A549 (cell line): ENCODE measurements at regions of chr12 and their contacts with region 1.

Region 1: DNA sequence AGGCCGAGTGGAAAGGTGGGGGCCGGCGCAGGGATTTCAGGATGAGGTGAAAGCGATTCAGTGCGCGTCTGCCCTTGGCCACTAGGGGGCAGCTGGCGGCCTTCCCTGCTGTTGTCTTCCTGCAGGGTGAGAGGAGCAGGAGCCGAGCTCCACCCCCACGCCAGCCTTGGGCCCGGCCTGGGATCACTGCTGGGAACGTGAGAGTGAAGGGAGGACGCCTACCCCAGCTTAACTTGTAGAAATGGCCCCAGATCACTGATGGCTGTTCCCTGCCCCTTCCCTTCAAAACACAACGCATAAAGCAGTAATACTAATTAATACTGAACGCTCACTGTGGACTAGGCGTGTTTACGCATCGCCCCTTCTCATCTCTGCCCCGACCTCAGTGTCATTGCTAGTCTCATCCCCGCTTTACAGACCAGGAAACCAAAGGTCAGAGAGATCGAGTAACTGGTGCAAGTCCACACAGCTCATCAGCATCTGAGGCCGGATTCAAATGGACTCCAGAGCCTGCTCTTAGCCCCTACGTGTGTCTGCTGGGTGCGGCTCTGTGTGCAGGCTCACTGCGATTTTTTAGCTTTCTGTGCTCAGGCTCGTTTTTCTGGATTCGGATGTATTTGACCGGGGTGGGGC is 24.3 kb downstream of the MVK start:
- DNase-seq: peak; percentile 83 to 95
- ATAC-seq: peak; percentile 92 to 97
- H3K4me3 ChIP-seq: no peak overlapping the region
- H3K27ac ChIP-seq: peak overlapping the region in 1 of 2 experiments; percentile 62; a peak in 2 of 6 replicates
- H3K4me1 ChIP-seq: peaks cover 4% of the 10 kb centered on the region
- CTCF ChIP-seq: peak; percentile 88
- EP300 ChIP-seq: no peak
- POLR2A ChIP-seq: no peak
- RAD21 ChIP-seq: peak; percentile 88 to 89

Region 2: GRCh38 chr12:109377139-109377685 is 220.7 kb before region 1 on chr12:
- CTCF ChIA-PET with region 1: no interaction called
- POLR2A ChIA-PET with region 1: no interaction called
- DNase-seq: no peak
- ATAC-seq: no peak
- H3K4me3 ChIP-seq: no peak overlapping the region
- H3K27ac ChIP-seq: no peak overlapping the region
- H3K4me1 ChIP-seq: no peaks in the 10 kb centered on the region
- CTCF ChIP-seq: no peak
- EP300 ChIP-seq: no peak
- POLR2A ChIP-seq: no peak
- RAD21 ChIP-seq: no peak

Region 3: GRCh38 chr12:109418848-109419480 is 178.9 kb before region 1 on chr12:
- CTCF ChIA-PET with region 1: no interaction called
- POLR2A ChIA-PET with region 1: no interaction called
- DNase-seq: no peak
- ATAC-seq: no peak
- H3K4me3 ChIP-seq: no peak overlapping the region
- H3K27ac ChIP-seq: no peak overlapping the region
- H3K4me1 ChIP-seq: no peaks in the 10 kb centered on the region
- CTCF ChIP-seq: no peak
- EP300 ChIP-seq: no peak
- POLR2A ChIP-seq: no peak
- RAD21 ChIP-seq: no peak

Region 4: DNA sequence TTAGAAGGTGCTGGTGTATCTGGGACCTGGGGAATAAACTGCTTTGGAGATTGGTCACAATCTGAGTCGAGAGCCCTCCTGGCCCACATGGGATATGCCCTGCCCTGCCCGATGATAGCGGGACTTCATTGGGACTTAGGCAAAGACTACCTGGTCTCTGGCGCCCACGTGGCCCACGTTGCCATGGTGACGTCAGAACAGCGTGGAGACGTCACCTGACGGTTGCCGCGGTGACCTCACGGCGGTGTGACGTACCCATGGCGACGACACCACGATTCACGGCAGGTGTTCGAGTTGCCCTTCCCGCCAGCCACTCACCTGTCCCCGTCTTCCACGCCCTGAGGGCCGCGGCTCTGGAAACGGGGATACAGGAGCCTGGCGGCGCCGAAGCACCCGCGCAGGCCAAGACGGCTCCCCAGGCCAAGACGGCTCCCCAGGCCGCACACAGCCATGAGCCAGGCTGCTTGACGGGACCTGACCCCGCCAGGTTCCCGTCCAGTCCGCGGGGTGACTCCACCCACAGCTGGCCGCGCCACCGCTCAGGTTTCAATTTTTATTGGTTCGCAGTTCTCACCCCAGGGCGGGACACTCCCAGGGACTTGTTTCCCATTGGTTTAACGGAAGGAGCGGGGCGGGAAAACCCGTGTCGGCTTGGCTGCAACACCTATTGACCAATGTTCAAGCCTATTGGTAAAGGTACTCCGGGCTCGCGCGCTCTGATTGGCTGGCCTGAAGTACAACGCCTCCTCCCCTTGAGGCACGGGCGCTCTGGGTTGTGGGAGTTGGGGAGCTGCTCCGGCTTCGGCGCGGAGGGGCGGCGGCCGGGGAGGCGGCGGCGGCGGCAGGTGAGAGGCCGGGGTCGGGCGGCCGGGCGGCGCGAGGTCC is 24.6 kb before region 1 on chr12 and contains the starts of genes MMAB and MVK:
- CTCF ChIA-PET with region 1: interaction called, 23 read pairs
- POLR2A ChIA-PET with region 1: no interaction called
- DNase-seq: peak; percentile 99 to 100
- ATAC-seq: peak; percentile 97 to 99
- H3K4me3 ChIP-seq: peak within 1 kb of the TSS; percentile 77
- H3K27ac ChIP-seq: peak within 1 kb of the TSS; percentile 83 to 87
- H3K4me1 ChIP-seq: peaks cover 11% of the 10 kb centered on the region; the same call in 1 of the 3 replicates
- CTCF ChIP-seq: no peak
- EP300 ChIP-seq: no peak
- POLR2A ChIP-seq: peak; percentile 70
- RAD21 ChIP-seq: no peak
- polyA plus RNA-seq, gene MMAB: 23.0 and 26.1 TPM in 2 replicates
- polyA plus RNA-seq, gene MVK: 5.9 and 7.0 TPM in 2 replicates

Region 5: GRCh38 chr12:109621211-109621694 is 23.3 kb after region 1 on chr12:
- CTCF ChIA-PET with region 1: interaction called, 34 read pairs
- POLR2A ChIA-PET with region 1: no interaction called
- DNase-seq: no peak
- ATAC-seq: no peak
- H3K4me3 ChIP-seq: no peak overlapping the region
- H3K27ac ChIP-seq: no peak overlapping the region
- H3K4me1 ChIP-seq: peaks cover 11% of the 10 kb centered on the region; the same call in 1 of the 3 replicates
- CTCF ChIP-seq: no peak
- EP300 ChIP-seq: no peak
- POLR2A ChIP-seq: no peak
- RAD21 ChIP-seq: no peak

Region 6: DNA sequence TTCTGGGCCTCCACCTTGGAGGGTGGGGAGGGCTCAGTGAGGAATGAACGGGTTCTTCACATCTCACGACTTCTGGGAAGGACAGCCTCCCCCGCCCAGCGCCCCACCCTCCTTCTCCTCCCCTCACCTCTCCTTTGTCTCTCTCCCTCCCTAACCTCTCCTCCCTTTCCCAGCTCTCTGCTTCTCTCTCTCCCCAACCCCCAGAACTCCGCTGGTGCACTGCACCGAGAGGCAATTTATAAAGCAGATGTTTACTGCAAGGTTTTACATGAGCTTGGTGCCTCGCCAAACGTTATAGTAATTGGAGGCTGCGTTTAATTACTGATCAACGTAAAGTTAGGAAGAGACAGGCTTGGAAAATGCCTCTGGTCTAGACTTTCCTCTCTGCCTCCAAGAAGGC is 72.8 kb after region 1 on chr12:
- CTCF ChIA-PET with region 1: interaction called, 11 read pairs
- POLR2A ChIA-PET with region 1: no interaction called
- DNase-seq: no peak
- ATAC-seq: no peak
- H3K4me3 ChIP-seq: no peak overlapping the region
- H3K27ac ChIP-seq: no peak overlapping the region
- H3K4me1 ChIP-seq: no peaks in the 10 kb centered on the region
- CTCF ChIP-seq: no peak
- EP300 ChIP-seq: no peak
- POLR2A ChIP-seq: no peak
- RAD21 ChIP-seq: no peak

Region 7: DNA sequence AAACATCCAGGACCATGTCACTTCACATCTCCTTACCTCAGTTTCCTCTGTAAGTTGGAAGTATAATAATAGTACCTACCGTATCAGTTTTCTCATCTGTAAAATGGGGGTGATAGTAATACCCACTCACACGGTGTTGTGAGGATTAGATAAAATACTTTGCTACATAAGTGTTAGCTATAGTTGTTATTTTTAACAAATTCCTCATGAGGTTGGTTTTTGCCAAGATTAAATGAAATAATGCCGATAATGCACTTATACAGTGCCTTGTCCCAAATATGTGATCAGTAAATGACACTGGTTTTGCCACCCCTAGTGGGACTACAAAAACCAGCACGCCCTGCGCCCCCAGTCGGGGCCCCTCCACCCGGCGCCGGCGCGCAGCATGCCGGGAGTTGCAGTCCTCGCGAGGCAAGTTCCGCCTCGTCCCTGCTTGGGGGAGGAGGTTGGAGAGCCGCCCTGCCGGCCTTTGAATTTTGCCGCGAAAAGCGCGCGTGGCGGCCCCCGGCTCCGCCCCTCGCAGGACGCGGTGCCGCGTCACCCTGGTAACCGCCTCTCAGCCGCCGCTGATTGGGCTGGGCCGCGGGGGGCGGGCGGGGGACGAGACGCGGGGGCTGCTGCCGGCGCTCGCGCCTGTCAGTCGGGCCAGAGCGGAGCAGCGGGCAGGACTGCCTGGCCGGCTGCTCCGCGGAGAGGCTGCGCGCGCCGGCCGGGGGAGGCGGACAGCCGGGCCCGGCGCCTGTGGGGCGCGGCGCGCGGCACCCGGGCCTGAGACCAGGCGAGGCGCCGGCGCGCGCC is 115.5 kb after region 1 on chr12 and contains the start of gene FAM222A:
- CTCF ChIA-PET with region 1: interaction called, 42 read pairs
- POLR2A ChIA-PET with region 1: interaction called, 7 read pairs
- DNase-seq: peak; percentile 95 to 97
- ATAC-seq: peak; percentile 77 to 90
- H3K4me3 ChIP-seq: peak within 1 kb of the TSS; percentile 52
- H3K27ac ChIP-seq: peak within 1 kb of the TSS; percentile 47 to 86
- H3K4me1 ChIP-seq: peaks cover 24% of the 10 kb centered on the region
- CTCF ChIP-seq: no peak
- EP300 ChIP-seq: no peak
- POLR2A ChIP-seq: peak; percentile 86
- RAD21 ChIP-seq: no peak
- polyA plus RNA-seq, gene FAM222A: 0.97 and 0.98 TPM in 2 replicates

Region 8: DNA sequence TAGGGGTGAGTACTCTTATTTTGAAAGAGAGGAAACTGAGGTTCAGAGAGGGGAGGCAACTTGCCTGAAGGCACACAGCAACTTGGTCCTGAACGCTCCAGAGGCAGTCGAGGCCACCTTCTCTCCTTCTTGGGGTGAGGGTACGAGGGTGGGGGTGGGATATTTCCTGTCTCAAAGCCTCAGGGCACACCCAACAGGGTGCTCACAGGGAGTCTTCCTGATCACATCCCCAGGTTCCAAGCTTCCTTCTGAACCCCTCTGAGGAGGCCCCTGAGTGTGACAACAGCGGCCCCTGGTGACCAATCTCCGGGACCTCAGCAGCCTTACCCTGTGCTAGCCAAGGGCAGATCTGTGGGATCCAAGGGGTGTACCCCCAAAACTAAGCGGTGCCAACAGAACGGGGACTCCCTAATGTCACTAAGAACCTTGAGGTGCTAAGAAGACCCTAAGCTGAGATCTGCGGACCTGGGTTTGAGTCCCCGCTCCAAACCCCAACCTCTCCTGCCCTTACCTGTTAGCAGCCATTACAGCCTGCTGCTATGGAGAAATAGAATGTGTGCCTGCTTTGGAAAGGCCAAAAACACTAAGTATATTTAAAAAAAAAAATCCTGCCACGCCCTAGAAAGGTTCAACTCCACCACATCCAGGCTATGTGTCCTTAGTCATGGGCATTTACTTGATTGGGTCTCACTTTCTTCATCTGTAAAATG is 177.4 kb after region 1 on chr12:
- CTCF ChIA-PET with region 1: interaction called, 162 read pairs
- POLR2A ChIA-PET with region 1: interaction called, 4 read pairs
- DNase-seq: peak; percentile 70 to 89
- ATAC-seq: peak; percentile 82 to 93
- H3K4me3 ChIP-seq: no peak overlapping the region
- H3K27ac ChIP-seq: no peak overlapping the region
- H3K4me1 ChIP-seq: no peaks in the 10 kb centered on the region
- CTCF ChIP-seq: peak; percentile 95
- EP300 ChIP-seq: no peak
- POLR2A ChIP-seq: no peak
- RAD21 ChIP-seq: peak; percentile 95 to 98

Region 9: DNA sequence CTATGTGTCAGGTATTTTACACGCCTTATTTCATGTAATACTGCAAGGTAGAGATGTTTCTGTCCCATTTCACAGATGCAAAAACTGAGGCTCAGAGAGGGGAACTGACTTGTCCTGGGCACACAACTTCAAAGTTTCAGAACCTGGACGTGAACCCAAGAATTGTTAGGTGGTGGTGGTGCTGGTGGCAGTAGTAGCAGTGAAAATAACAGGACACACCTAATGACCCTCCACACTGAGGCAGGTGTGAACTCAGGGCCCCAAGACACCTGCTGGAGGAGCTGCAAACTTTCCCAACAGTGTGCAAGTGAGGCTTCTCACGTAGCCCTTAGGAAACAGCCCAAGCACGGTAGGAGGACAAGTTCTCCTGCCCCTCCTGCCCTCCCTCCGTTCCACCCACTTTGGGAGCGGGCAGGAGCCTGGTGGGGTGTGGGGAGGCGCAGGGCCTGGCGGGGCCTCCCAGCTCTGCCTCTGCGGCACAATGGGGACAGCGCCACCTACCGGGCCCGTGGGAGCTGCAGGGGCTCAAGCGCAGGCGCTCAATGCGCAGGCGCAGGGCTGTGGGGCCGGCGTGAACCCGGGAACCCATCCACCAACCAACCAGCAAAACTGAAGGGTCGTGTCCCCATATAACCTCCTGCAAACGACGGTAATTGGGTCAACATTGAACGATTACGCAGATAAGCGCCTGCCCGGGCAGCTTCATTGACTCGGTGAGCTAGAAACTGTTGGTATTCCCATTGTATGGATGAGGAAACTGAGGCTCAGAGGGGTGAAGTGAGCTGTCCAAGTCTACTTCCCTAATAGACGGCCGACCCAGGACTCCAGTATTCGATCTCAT is 247.3 kb after region 1 on chr12:
- CTCF ChIA-PET with region 1: interaction called, 14 read pairs
- POLR2A ChIA-PET with region 1: no interaction called
- DNase-seq: peak; percentile 88 to 90
- ATAC-seq: peak; percentile 91 to 95
- H3K4me3 ChIP-seq: peak overlapping the region; percentile 35; the same call in 2 of the 3 replicates
- H3K27ac ChIP-seq: peak overlapping the region; percentile 58 to 76
- H3K4me1 ChIP-seq: peaks cover 10% of the 10 kb centered on the region
- CTCF ChIP-seq: peak; percentile 99
- EP300 ChIP-seq: no peak
- POLR2A ChIP-seq: no peak
- RAD21 ChIP-seq: peak; percentile 93 to 96